Gastrocnemius medialis (tissue), 4 donors: ENCODE measurements at regions of chr7 and their contacts with region 1.

Region 1: GRCh38 chr7:44082541-44083207 is 344 bp upstream of the POLM start:
- DNase-seq: peak; percentile 99
- ATAC-seq: peak; percentile 89 to 92
- H3K4me3 ChIP-seq: peak overlapping the region; percentile 60 to 98 (median 83)
- H3K27ac ChIP-seq: peak overlapping the region; percentile 90 to 96 (median 94)
- H3K4me1 ChIP-seq: peaks cover 40 to 41% of the 10 kb centered on the region in 2 donors
- H3K27me3 ChIP-seq: no peaks in the 10 kb centered on the region
- CTCF ChIP-seq: no peak
- POLR2A ChIP-seq: peak; percentile 63 to 80

Region 2: DNA sequence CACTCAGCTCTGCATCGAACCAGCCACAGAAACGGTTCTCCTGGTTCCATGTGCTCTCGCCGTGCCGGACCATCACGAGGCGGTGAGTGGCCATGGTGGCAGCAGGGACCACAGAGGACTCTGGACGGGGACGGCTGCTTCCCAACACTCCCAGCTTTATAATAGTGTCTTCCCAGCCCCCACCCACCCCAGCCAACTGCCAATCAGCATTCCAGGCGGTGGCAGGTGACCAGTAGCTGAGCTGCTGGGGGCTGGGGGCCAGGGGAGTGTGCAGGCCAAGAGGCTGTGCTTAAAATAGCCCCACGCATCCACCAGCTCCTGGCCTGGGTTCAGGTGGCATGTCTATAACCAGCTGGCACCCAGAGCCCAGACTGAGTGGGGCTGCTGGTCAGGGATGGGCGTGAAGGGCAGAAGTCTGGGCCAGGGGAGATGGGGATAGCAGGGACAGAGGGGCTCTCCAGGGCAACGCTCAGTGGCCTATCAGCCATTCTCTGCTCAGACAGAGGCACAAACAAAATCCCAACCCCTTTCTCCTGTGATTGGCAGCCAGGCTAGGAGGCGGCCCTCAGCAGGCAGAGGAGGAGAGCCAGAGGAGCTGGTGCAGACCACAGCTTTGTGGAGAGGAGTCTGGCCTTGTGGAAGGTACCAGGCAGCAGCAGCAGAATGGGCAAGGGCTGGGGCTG is 17.1 kb before region 1 on chr7 and contains the start of gene PGAM2:
- in situ Hi-C with region 1: no loop called
- intact Hi-C with region 1: loop called (anchors 2 kb)
- DNase-seq: peak; percentile 89 to 96
- ATAC-seq: peak; percentile 65 to 73
- H3K4me3 ChIP-seq: peak within 1 kb of the TSS; percentile 27 to 53 (median 46)
- H3K27ac ChIP-seq: peak within 1 kb of the TSS; percentile 85 to 95 (median 90)
- H3K4me1 ChIP-seq: peaks cover 56 to 70% of the 10 kb centered on the region in 2 donors
- H3K27me3 ChIP-seq: no peaks in the 10 kb centered on the region
- CTCF ChIP-seq: no peak
- POLR2A ChIP-seq: peak; percentile 73 to 75
- total RNA-seq, gene PGAM2: 129 to 355 (median 306) TPM

Region 3: DNA sequence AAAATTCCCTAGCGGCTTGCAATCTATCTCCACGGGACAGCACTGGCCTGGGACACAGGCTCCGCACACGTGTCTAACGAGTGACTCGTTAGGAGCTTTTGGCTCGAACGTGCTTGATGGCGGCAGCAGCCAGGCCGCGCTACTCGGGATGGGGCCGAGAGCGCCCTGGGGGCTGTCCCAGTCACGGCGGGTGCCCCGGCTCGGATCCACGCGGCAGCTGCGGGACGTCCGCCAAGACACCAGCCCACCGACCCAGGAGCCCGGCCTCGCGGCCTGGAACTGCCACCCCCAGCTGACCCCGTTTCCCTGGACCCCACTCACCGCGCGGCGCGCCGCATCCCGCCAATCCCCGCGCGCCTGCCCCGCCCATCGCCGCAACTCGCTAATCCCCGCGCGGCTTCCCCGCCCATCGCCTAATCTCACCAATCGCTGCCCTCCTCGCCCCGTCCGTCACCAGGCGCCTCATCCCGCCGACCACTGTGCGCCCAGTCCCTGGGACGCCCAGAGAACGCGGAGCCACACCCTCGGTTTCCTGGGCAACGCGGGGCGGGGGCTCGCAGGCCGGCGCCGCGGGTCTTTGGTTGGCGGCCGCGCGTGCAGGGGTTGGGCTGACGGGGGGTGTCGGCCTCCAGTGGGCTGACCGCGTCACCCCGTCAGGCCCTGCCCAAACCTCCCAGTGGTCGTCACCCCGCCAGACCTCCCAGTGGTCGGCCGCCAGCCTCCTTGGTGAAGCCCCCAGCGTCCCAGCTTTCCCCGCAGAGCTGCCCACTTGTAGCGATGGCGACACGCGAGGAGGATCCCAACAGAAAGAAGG is 40.7 kb after region 1 on chr7 and contains the start of gene POLD2:
- in situ Hi-C with region 1: loop called in 1 of 4 experiments (anchors 5 kb)
- intact Hi-C with region 1: loop called (anchors 1 kb)
- DNase-seq: peak; percentile 97 to 98
- ATAC-seq: peak; percentile 95 to 96
- H3K4me3 ChIP-seq: peak within 1 kb of the TSS; percentile 62 to 92 (median 72)
- H3K27ac ChIP-seq: peak within 1 kb of the TSS; percentile 88 to 95 (median 88)
- H3K4me1 ChIP-seq: peaks cover 19 to 31% of the 10 kb centered on the region in 2 donors
- H3K27me3 ChIP-seq: no peaks in the 10 kb centered on the region
- CTCF ChIP-seq: peak in 2 of 5 experiments; percentile 7 to 10
- POLR2A ChIP-seq: peak; percentile 90 to 93
- total RNA-seq, gene POLD2: 69.4 to 93.0 (median 77.7) TPM

Region 4: GRCh38 chr7:44200647-44201461 is 118.2 kb after region 1 on chr7 and contains the start of gene YKT6:
- in situ Hi-C with region 1: no loop called
- intact Hi-C with region 1: loop called (anchors 1 kb)
- DNase-seq: peak; percentile 93 to 94
- ATAC-seq: peak; percentile 99 to 100
- H3K4me3 ChIP-seq: peak within 1 kb of the TSS; percentile 80 to 98 (median 91)
- H3K27ac ChIP-seq: peak within 1 kb of the TSS; percentile 79 to 91 (median 86)
- H3K4me1 ChIP-seq: peaks cover 14% of the 10 kb centered on the region in 2 donors
- H3K27me3 ChIP-seq: no peaks in the 10 kb centered on the region
- CTCF ChIP-seq: peak; percentile 66 to 74 (median 70)
- POLR2A ChIP-seq: peak; percentile 77 to 92
- total RNA-seq, gene YKT6: 37.9 to 79.5 (median 72.5) TPM